Pancreas (tissue), 10 donors: ENCODE measurements at regions of chr3 and their contacts with region 1.

Region 1: DNA sequence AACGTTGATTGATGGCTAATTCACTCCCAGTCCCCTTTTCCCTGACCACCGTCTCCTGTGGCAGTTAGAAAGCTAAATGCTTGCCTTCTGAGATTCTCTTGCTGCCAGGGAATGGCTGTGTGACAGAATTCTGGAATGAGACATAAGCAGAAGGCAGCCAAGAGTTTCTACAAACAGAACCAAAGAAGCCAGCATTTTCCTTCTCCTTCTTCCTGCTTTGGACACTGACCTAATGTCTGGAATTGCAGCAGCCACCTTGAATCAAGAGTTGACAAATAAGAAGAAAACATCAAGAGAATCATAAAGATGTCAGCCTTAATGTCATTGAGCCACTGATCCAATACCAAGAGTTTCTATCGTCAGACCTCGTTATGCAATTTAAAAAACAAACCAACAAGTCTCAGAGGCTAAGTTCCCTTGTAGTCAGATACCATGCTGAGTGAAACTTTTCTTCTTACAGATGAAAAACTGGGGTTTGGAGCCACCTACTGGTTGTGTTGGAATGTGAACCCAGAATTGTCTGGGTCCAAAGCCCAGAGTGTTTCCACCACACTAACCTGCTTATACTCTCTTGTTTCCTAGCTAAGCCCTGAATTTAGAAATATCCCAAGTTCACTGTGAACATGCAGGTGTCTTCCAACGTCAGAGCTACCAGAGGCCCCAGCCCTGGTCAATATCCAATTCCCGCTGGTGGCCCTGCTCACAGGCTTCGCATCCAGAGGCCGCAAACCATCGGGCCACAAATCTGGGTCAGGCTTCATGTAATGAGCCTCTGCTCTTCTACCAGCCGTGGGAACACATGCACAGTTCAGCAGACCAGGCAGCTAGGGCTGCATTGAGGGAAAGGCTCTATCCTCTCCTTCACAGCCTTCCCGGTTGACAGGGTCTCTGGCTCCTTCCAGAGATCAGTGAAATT is 42.5 kb downstream of the MCF2L2 start:
- DNase-seq: peak in 3 of 6 donors; percentile 31 to 71 (median 42)
- ATAC-seq: peak; percentile 82 to 92 (median 91)
- H3K4me3 ChIP-seq: no peak overlapping the region
- H3K27ac ChIP-seq: peak overlapping the region in 2 of 4 donors; percentile 48 to 54
- H3K4me1 ChIP-seq: peaks cover 0 to 6% (median 0%) of the 10 kb centered on the region in 3 donors
- H3K27me3 ChIP-seq: no peaks in the 10 kb centered on the region
- CTCF ChIP-seq: peak; percentile 38 to 71 (median 56)

Region 2: DNA sequence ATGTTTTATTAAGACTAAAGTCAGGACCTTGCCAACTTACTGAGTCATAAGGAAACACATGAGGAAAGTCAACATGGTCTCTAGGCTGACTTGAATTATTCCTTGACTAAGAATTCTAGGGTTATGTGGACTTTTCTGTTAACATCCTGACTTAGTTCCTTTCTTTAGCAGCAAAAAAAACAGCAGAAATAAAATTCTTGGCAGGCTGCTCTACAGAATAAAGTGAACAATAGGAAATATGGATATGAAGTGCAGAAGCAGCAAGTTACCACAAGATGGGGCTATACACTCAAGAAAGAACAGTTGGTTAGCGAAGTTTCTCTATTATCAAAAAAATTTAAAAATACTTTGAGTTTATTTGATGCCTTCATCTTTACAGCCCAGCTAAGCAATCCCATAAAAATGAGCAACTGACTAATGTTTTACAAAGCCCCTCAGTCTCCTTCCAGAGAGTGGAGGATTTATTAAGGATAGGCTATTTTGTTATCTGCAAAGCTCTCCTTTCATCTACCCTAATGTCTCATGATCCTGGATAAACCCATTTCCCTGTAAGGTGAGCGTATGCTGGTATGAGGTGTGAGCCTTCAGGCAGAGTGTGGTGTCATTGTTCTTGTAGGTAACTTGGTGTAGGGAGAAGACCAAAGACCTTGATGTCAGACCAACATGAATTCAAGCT is 263.6 kb before region 1 on chr3:
- intact Hi-C with region 1: loop called in 2 of 3 experiments (anchors 5 to 10 kb)
- DNase-seq: no peak
- ATAC-seq: peak; percentile 79 to 91 (median 88)
- H3K4me3 ChIP-seq: no peak overlapping the region
- H3K27ac ChIP-seq: no peak overlapping the region
- H3K4me1 ChIP-seq: peaks cover 0 to 5% (median 4%) of the 10 kb centered on the region in 3 donors
- H3K27me3 ChIP-seq: no peaks in the 10 kb centered on the region
- CTCF ChIP-seq: peak; percentile 51 to 85 (median 70)

Region 3: GRCh38 chr3:183180105-183180783 is 205.7 kb before region 1 on chr3:
- intact Hi-C with region 1: loop called (anchors 5 to 10 kb)
- DNase-seq: no peak
- ATAC-seq: no peak
- H3K4me3 ChIP-seq: no peak overlapping the region
- H3K27ac ChIP-seq: no peak overlapping the region
- H3K4me1 ChIP-seq: peaks cover 3 to 6% (median 5%) of the 10 kb centered on the region in 3 donors
- H3K27me3 ChIP-seq: peaks cover 0 to 19% (median 2%) of the 10 kb centered on the region in 4 donors
- CTCF ChIP-seq: no peak

Region 4: DNA sequence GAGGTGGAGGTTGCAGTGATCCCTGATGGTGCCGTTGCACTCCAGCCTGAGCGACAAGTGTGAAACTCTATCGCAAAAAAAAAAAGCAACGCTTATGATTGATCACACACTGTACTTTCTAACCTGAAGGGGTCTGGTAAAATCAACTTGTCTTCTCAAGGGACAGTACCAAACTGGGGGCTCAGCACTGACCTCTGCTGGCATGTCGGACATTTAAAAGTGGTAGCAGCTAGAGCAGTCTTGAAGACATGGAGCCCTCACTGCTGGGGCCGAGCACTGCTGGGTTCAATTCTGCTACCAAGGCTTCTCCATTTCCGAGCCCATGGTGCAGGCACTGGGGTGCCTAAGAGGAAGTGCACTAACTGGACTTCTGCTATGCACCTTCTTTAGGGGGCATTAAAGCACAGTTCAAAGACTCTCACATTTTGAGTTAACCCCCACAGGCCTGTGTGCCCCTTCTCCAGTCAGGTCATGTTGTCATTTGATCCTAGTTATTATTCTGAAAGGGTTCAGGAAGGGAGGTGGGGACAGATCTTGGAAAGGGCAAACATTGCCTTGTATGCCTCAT is 197.0 kb before region 1 on chr3:
- intact Hi-C with region 1: loop called (anchors 5 to 10 kb)
- DNase-seq: peak in 3 of 6 donors; percentile 23 to 65 (median 40)
- ATAC-seq: peak in 3 of 4 donors; percentile 51 to 74 (median 58)
- H3K4me3 ChIP-seq: no peak overlapping the region
- H3K27ac ChIP-seq: no peak overlapping the region
- H3K4me1 ChIP-seq: peaks cover 0 to 9% (median 0%) of the 10 kb centered on the region in 3 donors
- H3K27me3 ChIP-seq: no peaks in the 10 kb centered on the region
- CTCF ChIP-seq: peak in 2 of 4 donors; percentile 14 to 22

Region 5: DNA sequence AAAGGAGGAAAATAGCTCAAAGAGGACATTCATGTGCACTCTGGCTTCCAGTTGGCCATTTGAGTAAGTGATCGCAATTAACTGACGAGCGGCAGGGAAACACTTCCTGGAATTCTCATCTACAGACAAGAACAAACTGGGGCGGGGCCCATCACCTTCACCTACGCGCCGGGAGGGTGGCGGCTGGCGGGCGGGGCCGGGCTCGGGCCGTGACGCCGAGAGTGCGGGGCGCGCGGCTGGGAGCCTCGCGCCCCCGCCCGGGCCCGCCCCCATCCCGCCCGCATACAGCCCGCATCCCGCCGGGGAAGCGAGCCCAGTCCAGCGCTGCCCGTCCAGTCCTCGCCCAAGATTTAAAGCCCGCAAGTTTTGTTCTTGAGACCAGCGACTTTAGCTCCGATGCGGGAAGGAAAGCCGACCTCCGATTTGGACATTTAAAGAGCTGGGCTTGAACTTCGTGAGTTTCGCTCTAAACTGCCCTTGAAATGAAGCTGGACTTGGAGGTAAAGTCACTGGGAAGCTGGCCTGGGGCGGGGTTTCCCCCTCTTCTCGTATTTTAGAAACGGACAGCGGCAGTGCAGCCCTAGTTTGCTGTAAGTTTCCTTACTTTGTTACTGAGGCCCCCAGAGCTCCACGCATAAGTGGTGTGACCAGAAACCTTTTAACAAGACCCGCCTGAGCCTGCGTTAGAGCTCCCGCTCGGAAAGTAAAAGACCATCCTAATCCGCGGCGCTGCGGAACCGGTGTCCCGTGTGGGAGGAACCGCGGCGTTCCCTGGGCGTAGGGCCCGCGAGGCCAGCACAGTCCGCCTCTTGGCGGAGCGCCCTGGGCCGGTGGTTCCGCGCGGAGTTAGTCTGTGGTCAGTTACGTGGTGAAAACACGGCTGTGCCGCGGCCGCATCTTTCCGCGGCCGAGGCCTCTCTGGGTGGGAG is 132.7 kb before region 1 on chr3 and contains the start of gene B3GNT5:
- intact Hi-C with region 1: loop called in 1 of 3 experiments (anchors 5 kb)
- DNase-seq: peak; percentile 73 to 87 (median 80)
- ATAC-seq: peak; percentile 74 to 83 (median 76)
- H3K4me3 ChIP-seq: peak within 1 kb of the TSS; percentile 31 to 91 (median 78)
- H3K27ac ChIP-seq: peak within 1 kb of the TSS; percentile 88 to 97 (median 92)
- H3K4me1 ChIP-seq: peaks cover 0 to 8% (median 0%) of the 10 kb centered on the region in 3 donors
- H3K27me3 ChIP-seq: no peaks in the 10 kb centered on the region
- CTCF ChIP-seq: no peak
- total RNA-seq, gene B3GNT5: 5.0 to 13.7 (median 5.6) TPM

Region 6: DNA sequence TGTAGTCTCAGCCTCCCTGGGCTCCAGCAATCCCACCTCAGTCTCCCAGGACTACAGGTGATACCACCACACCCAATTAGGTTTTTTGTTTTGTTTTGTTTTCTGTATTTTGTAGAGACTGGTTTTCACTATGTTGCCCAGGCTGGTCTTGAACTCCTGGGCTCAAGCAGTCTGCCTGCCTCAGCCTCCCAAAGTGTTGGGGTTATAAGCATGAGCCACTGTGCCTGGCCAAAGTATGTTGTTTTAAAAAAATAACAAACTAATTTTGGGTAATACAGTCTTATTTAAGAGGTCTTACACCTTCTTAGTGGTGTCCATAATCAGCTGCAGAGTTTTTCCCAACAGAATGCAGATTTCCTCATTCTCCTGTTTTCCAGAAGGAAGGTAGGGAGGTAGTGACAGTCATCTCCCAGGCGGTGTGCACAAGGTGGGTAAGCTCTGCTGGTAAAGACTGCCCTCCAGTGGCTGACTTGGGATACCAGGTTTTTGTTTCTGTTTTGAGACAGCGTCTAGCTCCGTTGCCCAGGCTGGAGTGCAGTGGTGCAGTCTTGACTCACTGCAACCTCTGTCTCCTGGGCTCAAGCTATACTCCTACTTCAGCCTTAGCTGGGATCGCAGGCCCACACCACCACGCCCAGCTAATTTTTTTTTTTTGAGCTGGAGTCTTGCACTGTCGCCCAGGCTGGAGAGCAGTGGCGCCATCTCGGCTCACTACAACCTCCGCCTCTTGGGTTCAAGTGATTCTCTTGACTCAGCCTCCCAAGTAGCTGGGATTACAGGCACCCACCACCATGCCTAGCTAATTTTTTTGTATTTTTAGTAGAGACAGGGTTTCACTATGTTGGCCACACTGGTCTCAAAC is 381.0 kb after region 1 on chr3:
- intact Hi-C with region 1: no loop called
- DNase-seq: peak in 5 of 6 donors; percentile 65 to 83 (median 67)
- ATAC-seq: peak; percentile 94 to 100 (median 98)
- H3K4me3 ChIP-seq: no peak overlapping the region
- H3K27ac ChIP-seq: no peak overlapping the region
- H3K4me1 ChIP-seq: no peaks in the 10 kb centered on the region
- H3K27me3 ChIP-seq: no peaks in the 10 kb centered on the region
- CTCF ChIP-seq: peak; percentile 54 to 81 (median 67)